ENCODE measurements at regions of chr20 and their contacts with region 1.

Region 1: GRCh38 chr20:62793912-62794724 is 2.2 kb upstream of the MRGBP start:
- DNase-seq: peak; percentile 83 to 97 (median 94)
- ATAC-seq: peak; percentile 62 to 75
- H3K4me3 Mint-ChIP-seq: peak overlapping the region; percentile 82 to 90 (median 86)
- H3K27ac Mint-ChIP-seq: peak overlapping the region; percentile 88 to 98 (median 96)
- H3K4me1 Mint-ChIP-seq: peaks cover 14 to 48% (median 44%) of the 10 kb centered on the region in 4 donors
- H3K27me3 Mint-ChIP-seq: no peaks in the 10 kb centered on the region

Region 2: GRCh38 chr20:62642040-62642665 is 152.0 kb before region 1 on chr20 and contains the start of gene SLCO4A1:
- POLR2A ChIA-PET with region 1: interaction called, 13 read pairs
- DNase-seq: peak; percentile 70 to 87 (median 82)
- ATAC-seq: peak; percentile 89
- H3K4me3 Mint-ChIP-seq: peak within 1 kb of the TSS; percentile 73 to 90 (median 79)
- H3K27ac Mint-ChIP-seq: peak within 1 kb of the TSS in 3 of 10 donors; percentile 71 to 87 (median 82)
- H3K4me1 Mint-ChIP-seq: peaks cover 10 to 26% (median 14%) of the 10 kb centered on the region in 4 donors
- H3K27me3 Mint-ChIP-seq: peaks cover 0 to 5% (median 0%) of the 10 kb centered on the region in 5 donors
- polyA plus RNA-seq, gene SLCO4A1: 0.93 TPM in 1 of 3 donors, not detected in the others

Region 3: GRCh38 chr20:62740286-62741141 is 53.6 kb before region 1 on chr20:
- POLR2A ChIA-PET with region 1: interaction called, 31 read pairs
- DNase-seq: peak in 9 of 10 donors; percentile 44 to 84 (median 66)
- ATAC-seq: peak; percentile 82 to 84
- H3K4me3 Mint-ChIP-seq: peak overlapping the region; percentile 65 to 89 (median 84)
- H3K27ac Mint-ChIP-seq: peak overlapping the region; percentile 63 to 95 (median 88)
- H3K4me1 Mint-ChIP-seq: peaks cover 8 to 54% (median 30%) of the 10 kb centered on the region in 4 donors
- H3K27me3 Mint-ChIP-seq: peaks cover 0 to 8% (median 4%) of the 10 kb centered on the region in 5 donors

Region 4: DNA sequence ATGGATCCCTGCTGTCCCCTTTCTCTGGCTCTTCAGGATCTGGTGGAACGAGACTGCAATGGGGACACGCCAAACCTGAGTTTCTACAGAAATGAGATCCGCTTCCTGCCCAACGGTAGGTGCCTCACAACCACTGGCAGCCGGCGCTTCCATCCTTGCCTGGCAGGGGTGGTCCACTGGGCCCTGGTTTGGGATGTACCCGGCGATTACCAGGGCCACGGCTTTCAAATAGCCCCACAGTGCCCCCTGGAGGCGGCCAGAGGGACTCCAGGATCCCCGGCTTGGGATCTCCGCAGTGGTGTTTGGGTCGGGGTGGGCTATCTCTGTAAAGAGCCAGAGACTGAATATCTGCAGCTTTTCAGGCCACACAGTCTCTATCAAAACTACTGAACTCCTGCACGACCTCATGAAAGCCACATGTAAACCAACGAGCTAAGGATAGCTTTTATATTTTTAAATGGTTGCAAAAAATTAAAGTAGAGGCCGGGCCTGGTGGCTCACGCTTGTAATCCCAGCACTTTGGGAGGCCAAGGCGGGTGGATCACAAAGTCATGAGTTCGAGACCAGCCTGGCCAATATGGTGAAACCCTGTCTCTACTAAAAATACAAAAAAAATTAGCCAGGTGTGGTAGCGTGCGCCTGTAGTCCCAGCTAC is 14.2 kb after region 1 on chr20:
- POLR2A ChIA-PET with region 1: interaction called, 145 read pairs
- DNase-seq: peak; percentile 56 to 86 (median 77)
- ATAC-seq: peak; percentile 35 to 56
- H3K4me3 Mint-ChIP-seq: peak overlapping the region; percentile 31 to 81 (median 60)
- H3K27ac Mint-ChIP-seq: peak overlapping the region in 9 of 10 donors; percentile 72 to 85 (median 80)
- H3K4me1 Mint-ChIP-seq: peaks cover 17 to 35% (median 28%) of the 10 kb centered on the region in 4 donors
- H3K27me3 Mint-ChIP-seq: no peaks in the 10 kb centered on the region

Region 5: DNA sequence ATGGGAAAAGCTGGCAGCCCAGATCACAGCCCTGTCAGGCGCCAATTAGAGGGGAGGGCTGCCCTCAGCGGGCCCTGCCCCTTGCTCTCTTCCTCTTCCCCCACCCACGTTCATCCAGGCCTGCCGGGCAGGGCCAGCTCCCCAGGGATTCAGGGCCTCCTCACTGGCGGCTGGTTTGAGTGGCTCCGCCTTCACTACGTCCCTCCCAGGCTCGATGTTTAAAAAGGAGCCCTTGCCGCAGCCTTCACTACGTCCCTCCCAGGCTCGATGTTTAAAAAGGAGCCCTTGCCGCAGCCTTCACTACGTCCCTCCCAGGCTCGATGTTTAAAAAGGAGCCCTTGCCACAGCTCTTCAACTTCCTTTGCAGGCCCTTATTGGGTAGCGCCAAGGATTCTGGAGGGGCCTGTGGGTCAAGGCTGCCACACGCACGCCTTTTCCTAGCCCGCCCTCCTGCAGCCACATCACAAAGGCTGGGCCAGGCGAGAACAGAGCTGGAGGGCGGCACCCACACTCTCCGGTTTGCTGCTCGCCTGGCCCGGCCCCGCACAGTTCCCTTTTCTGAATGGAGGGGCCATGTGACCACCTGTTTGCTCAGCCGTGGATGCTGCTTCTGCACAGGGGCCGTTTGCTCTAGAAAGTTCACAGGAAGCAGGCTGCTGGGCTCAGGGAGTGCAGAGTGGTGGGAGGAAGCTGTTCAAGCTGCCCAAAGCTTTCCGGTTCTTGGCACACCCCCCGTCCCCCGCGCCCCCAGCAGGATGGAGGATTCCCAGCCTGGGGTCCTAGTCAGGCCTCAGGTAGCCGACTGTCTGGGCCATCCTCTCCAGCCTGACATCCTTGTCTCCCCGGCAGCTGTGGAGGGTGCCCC is 160.0 kb after region 1 on chr20:
- POLR2A ChIA-PET with region 1: interaction called, 13 read pairs
- DNase-seq: peak; percentile 59 to 92 (median 80)
- ATAC-seq: peak; percentile 89 to 90
- H3K4me3 Mint-ChIP-seq: peak overlapping the region; percentile 76 to 92 (median 88)
- H3K27ac Mint-ChIP-seq: peak overlapping the region; percentile 88 to 97 (median 95)
- H3K4me1 Mint-ChIP-seq: peaks cover 13 to 67% (median 38%) of the 10 kb centered on the region in 4 donors
- H3K27me3 Mint-ChIP-seq: no peaks in the 10 kb centered on the region